HCT116 (cell line): ENCODE measurements at regions of chr16 and their contacts with region 1.

Region 1: GRCh38 chr16:84277237-84277823 is 17.3 kb upstream of the WFDC1 start:
- DNase-seq: peak; percentile 48
- ATAC-seq: peak; percentile 91
- H3K4me3 ChIP-seq: no peak overlapping the region
- H3K27ac ChIP-seq: no peak overlapping the region
- H3K4me1 ChIP-seq: no peaks in the 10 kb centered on the region
- H3K27me3 ChIP-seq: no peaks in the 10 kb centered on the region
- CTCF ChIP-seq: peak; percentile 94 to 99 (median 98)
- POLR2A ChIP-seq: no peak
- RAD21 ChIP-seq: peak; percentile 97

Region 2: GRCh38 chr16:84266451-84266850 is 10.9 kb before region 1 on chr16:
- CTCF ChIA-PET with region 1: interaction called, 12 read pairs
- POLR2A ChIA-PET with region 1: no interaction called
- RAD21 ChIA-PET with region 1: interaction called in 1 of 2 experiments, 3 read pairs
- intact Hi-C with region 1: no loop called
- DNase-seq: peak; percentile 93
- ATAC-seq: peak; percentile 100
- H3K4me3 ChIP-seq: no peak overlapping the region
- H3K27ac ChIP-seq: no peak overlapping the region
- H3K4me1 ChIP-seq: peaks cover 0 to 5% of the 10 kb centered on the region in 2 experiments; a peak in 2 of 4 replicates
- H3K27me3 ChIP-seq: peaks cover 4% of the 10 kb centered on the region; the same call in 1 of the 2 replicates
- CTCF ChIP-seq: no peak
- POLR2A ChIP-seq: no peak
- RAD21 ChIP-seq: no peak

Region 3: GRCh38 chr16:84484579-84485254 is 207.4 kb after region 1 on chr16:
- CTCF ChIA-PET with region 1: interaction called, 14 read pairs
- POLR2A ChIA-PET with region 1: no interaction called
- RAD21 ChIA-PET with region 1: interaction called in 1 of 2 experiments, 5 read pairs
- intact Hi-C with region 1: loop called (anchors 1 kb)
- DNase-seq: peak; percentile 41
- ATAC-seq: peak; percentile 84
- H3K4me3 ChIP-seq: no peak overlapping the region
- H3K27ac ChIP-seq: no peak overlapping the region
- H3K4me1 ChIP-seq: no peaks in the 10 kb centered on the region
- H3K27me3 ChIP-seq: no peaks in the 10 kb centered on the region
- CTCF ChIP-seq: peak; percentile 75 to 91 (median 80)
- POLR2A ChIP-seq: no peak
- RAD21 ChIP-seq: peak; percentile 95

Region 4: DNA sequence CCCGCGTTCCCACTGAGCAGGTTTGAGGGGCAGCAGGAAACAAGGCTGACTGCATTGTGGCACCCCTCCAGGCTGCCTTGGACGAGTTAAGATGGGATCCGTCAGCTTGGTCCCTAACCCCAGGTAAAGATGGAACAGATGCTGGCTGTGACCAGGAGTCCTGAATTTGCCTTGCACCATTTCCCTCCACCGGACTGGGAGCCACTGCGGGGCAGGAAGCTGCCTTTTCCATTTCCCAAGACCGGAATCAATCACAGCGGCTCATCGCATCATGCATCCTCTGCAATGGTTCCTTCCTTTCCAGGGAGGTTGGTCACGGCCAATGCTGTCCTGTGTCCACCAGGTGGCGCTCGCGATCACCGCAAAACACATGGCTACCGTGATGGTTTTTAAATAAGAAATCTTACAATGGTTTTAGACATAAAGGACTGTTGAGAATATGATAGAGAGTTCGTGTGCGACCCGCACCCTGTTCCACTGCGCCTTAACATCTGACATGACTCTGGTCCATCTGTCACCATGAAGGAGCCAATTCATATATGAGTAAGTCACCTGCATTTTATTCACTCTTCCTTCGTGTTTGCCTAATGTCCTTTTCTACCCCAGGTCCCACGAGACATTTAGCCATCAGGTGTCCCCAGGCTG is 234.0 kb after region 1 on chr16:
- CTCF ChIA-PET with region 1: interaction called, 33 read pairs
- POLR2A ChIA-PET with region 1: no interaction called
- RAD21 ChIA-PET with region 1: interaction called, 4 to 10 read pairs
- intact Hi-C with region 1: loop called (anchors 1 kb)
- DNase-seq: peak; percentile 72
- ATAC-seq: peak; percentile 85
- H3K4me3 ChIP-seq: peak overlapping the region; percentile 12 to 13; a peak in 2 of 4 replicates
- H3K27ac ChIP-seq: no peak overlapping the region
- H3K4me1 ChIP-seq: peaks cover under 1 to 24% of the 10 kb centered on the region in 2 experiments
- H3K27me3 ChIP-seq: no peaks in the 10 kb centered on the region
- CTCF ChIP-seq: peak in 2 of 3 experiments; percentile 99 to 100; a peak in 4 of 6 replicates
- POLR2A ChIP-seq: no peak
- RAD21 ChIP-seq: no peak